GM12878 (cell line): ENCODE measurements at regions of chr1 and their contacts with region 1.

Region 1: GRCh38 chr1:66968574-66968973 is 43.8 kb downstream of the MIER1 start:
- DNase-seq: no peak
- ATAC-seq: no peak
- H3K4me3 ChIP-seq: no peak overlapping the region
- H3K27ac ChIP-seq: no peak overlapping the region
- H3K4me1 ChIP-seq: no peaks in the 10 kb centered on the region
- H3K27me3 ChIP-seq: no peaks in the 10 kb centered on the region
- CTCF ChIP-seq: no peak
- EP300 ChIP-seq: no peak
- POLR2A ChIP-seq: no peak
- RAD21 ChIP-seq: no peak

Region 2: GRCh38 chr1:66840929-66841328 is 127.6 kb before region 1 on chr1:
- CTCF ChIA-PET with region 1: no interaction called
- POLR2A ChIA-PET with region 1: no interaction called
- RAD21 ChIA-PET with region 1: no interaction called
- SMC1A ChIA-PET with region 1: no interaction called
- in situ Hi-C with region 1: no loop called
- intact Hi-C with region 1: no loop called
- DNase-seq: no peak
- ATAC-seq: no peak
- H3K4me3 ChIP-seq: no peak overlapping the region
- H3K27ac ChIP-seq: no peak overlapping the region
- H3K4me1 ChIP-seq: no peaks in the 10 kb centered on the region
- H3K27me3 ChIP-seq: no peaks in the 10 kb centered on the region
- CTCF ChIP-seq: no peak
- EP300 ChIP-seq: no peak
- POLR2A ChIP-seq: no peak
- RAD21 ChIP-seq: no peak

Region 3: GRCh38 chr1:66954208-66954607 is 14.4 kb before region 1 on chr1:
- CTCF ChIA-PET with region 1: interaction called, 3 read pairs
- POLR2A ChIA-PET with region 1: interaction called, 5 read pairs
- RAD21 ChIA-PET with region 1: no interaction called
- SMC1A ChIA-PET with region 1: no interaction called
- in situ Hi-C with region 1: no loop called
- intact Hi-C with region 1: loop called (anchors 2 kb)
- DNase-seq: no peak
- ATAC-seq: peak; percentile 89
- H3K4me3 ChIP-seq: no peak overlapping the region
- H3K27ac ChIP-seq: peak overlapping the region; percentile 37
- H3K4me1 ChIP-seq: no peaks in the 10 kb centered on the region
- H3K27me3 ChIP-seq: no peaks in the 10 kb centered on the region
- CTCF ChIP-seq: no peak
- EP300 ChIP-seq: no peak
- POLR2A ChIP-seq: no peak
- RAD21 ChIP-seq: no peak